Naive thymus-derived CD4-positive, alpha-beta T cell (primary cell): ENCODE measurements at regions of chr16 and their contacts with region 1.

Region 1: DNA sequence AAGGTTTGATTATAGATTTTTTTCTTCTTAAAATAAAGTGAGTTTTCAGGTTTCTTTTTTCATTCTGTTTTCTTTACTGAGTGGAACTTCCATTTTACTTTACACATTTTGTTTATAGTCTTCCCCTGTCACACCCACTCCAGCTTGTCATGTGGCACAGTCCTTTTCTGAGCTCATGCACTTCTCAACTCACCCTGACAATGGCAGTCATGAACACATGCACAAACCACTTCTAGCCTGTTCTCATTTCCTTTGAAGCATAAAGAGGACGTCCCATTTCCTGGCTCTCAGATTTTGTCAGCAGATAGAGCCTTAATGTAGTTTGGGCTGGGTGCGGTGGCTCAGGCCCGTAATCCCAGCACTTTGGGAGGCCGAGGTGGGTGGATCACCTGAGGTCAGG is 168.0 kb downstream of the AHSP start:
- DNase-seq: peak in 7 of 9 donors; percentile 73 to 91 (median 84)
- ATAC-seq: peak; percentile 92
- H3K4me3 ChIP-seq: no peak overlapping the region
- H3K4me3 Mint-ChIP-seq: no peak overlapping the region
- H3K27ac ChIP-seq: no peak overlapping the region
- H3K27ac Mint-ChIP-seq: no peak overlapping the region
- H3K4me1 ChIP-seq: peaks cover 14 to 25% of the 10 kb centered on the region in 2 donors
- H3K4me1 Mint-ChIP-seq: peaks cover 0 to 18% (median 15%) of the 10 kb centered on the region in 7 donors
- H3K27me3 ChIP-seq: no peaks in the 10 kb centered on the region
- H3K27me3 Mint-ChIP-seq: peaks cover 0 to 26% (median 0%) of the 10 kb centered on the region in 5 donors

Region 2: GRCh38 chr16:31292704-31293103 is 403.0 kb before region 1 on chr16:
- CTCF ChIA-PET with region 1: no interaction called
- POLR2A ChIA-PET with region 1: no interaction called
- intact Hi-C with region 1: no loop called
- DNase-seq: no peak
- ATAC-seq: no peak
- H3K4me3 ChIP-seq: no peak overlapping the region
- H3K4me3 Mint-ChIP-seq: no peak overlapping the region
- H3K27ac ChIP-seq: no peak overlapping the region
- H3K27ac Mint-ChIP-seq: no peak overlapping the region
- H3K4me1 ChIP-seq: no peaks in the 10 kb centered on the region
- H3K4me1 Mint-ChIP-seq: peaks cover 0 to 4% (median 0%) of the 10 kb centered on the region in 7 donors
- H3K27me3 ChIP-seq: no peaks in the 10 kb centered on the region
- H3K27me3 Mint-ChIP-seq: peaks cover 0 to 29% (median 0%) of the 10 kb centered on the region in 5 donors

Region 3: GRCh38 chr16:31472709-31473203 is 222.9 kb before region 1 on chr16:
- CTCF ChIA-PET with region 1: no interaction called
- POLR2A ChIA-PET with region 1: interaction called, 4 read pairs
- intact Hi-C with region 1: loop called in 1 of 2 experiments (anchors 1 kb)
- DNase-seq: peak in 1 of 9 donors; percentile 36
- ATAC-seq: peak; percentile 33
- H3K4me3 ChIP-seq: no peak overlapping the region
- H3K4me3 Mint-ChIP-seq: peak overlapping the region; percentile 60 to 84 (median 79)
- H3K27ac ChIP-seq: no peak overlapping the region
- H3K27ac Mint-ChIP-seq: peak overlapping the region in 1 of 9 donors; percentile 64
- H3K4me1 ChIP-seq: peaks cover 4 to 6% of the 10 kb centered on the region in 2 donors
- H3K4me1 Mint-ChIP-seq: peaks cover 8 to 29% (median 21%) of the 10 kb centered on the region in 7 donors
- H3K27me3 ChIP-seq: no peaks in the 10 kb centered on the region
- H3K27me3 Mint-ChIP-seq: peaks cover 0 to 52% (median 14%) of the 10 kb centered on the region in 5 donors

Region 4: GRCh38 chr16:31641279-31641678 is 54.4 kb before region 1 on chr16:
- CTCF ChIA-PET with region 1: no interaction called
- POLR2A ChIA-PET with region 1: no interaction called
- intact Hi-C with region 1: no loop called
- DNase-seq: no peak
- ATAC-seq: no peak
- H3K4me3 ChIP-seq: no peak overlapping the region
- H3K4me3 Mint-ChIP-seq: no peak overlapping the region
- H3K27ac ChIP-seq: no peak overlapping the region
- H3K27ac Mint-ChIP-seq: no peak overlapping the region
- H3K4me1 ChIP-seq: no peaks in the 10 kb centered on the region
- H3K4me1 Mint-ChIP-seq: peaks cover 0 to 5% (median 0%) of the 10 kb centered on the region in 7 donors
- H3K27me3 ChIP-seq: no peaks in the 10 kb centered on the region
- H3K27me3 Mint-ChIP-seq: peaks cover 0 to 32% (median 8%) of the 10 kb centered on the region in 5 donors